Calu3 (cell line): ENCODE measurements at regions of chr1 and their contacts with region 1.

Region 1: DNA sequence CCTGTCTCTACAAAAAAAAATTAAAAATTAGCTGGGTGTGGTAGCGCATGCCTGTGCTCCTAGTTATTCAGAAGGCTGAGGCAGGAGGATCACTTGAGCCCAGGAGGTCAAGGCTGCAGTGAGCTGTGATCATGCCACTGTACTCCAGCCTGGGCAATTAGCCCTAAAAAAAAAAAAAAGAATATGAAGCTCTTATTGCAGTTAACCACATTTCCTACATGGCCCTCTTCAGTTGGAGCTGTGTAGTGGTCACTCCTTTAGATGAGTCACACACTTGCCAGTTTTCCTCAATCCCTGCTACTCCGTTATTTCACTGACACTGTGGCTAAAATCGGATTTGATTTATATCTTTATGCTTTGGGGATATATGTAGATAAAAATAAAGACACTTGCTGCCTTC is 11.8 kb downstream of the NFYC start:
- DNase-seq: no peak
- H3K4me3 Mint-ChIP-seq: no peak overlapping the region
- H3K27ac Mint-ChIP-seq: no peak overlapping the region
- H3K4me1 Mint-ChIP-seq: peaks cover 1% of the 10 kb centered on the region
- H3K27me3 Mint-ChIP-seq: no peaks in the 10 kb centered on the region
- CTCF ChIP-seq: no peak

Region 2: DNA sequence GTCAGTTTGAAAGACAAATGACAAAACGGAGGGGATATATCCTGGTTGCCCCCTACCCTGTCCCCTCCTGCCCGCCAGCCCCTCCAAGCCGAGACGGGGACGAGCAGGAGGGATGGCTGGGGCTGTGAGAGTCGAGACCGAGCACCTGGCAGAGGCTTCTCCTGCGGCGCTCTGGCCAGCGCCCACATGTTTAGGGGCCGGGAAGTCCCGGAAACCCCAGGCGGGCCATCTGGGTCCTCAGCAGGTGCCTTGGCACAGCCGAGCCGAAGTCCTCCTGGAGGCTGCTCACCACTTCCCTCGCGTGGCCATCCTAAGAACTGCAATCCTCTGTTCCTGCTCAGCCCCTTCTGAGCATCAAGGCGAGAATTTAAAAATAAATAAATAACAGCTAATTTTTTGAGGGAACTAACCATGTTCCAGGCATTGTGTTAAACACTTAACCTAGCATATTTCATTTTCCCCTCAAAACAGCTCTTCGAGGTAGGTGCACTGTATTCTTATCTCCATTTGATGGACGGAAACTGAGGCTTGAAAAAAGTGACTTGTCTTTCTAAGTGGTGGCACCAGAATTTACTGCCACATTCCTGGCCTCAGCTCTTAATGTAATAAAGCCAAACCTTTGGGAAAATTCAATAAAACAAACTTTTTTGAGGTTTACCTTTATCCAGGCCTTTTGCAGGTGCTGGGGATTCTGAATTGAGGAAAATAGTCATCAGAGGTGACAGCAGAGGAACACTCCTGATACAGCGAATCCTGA is 34.4 kb before region 1 on chr1:
- CTCF ChIA-PET with region 1: no interaction called
- intact Hi-C with region 1: no loop called
- DNase-seq: peak; percentile 89
- H3K4me3 Mint-ChIP-seq: peak overlapping the region; percentile 52
- H3K27ac Mint-ChIP-seq: no peak overlapping the region
- H3K4me1 Mint-ChIP-seq: peaks cover 10% of the 10 kb centered on the region
- H3K27me3 Mint-ChIP-seq: peaks cover 25% of the 10 kb centered on the region
- CTCF ChIP-seq: peak; percentile 83

Region 3: GRCh38 chr1:40691538-40692428 is 11.5 kb before region 1 on chr1 and contains the start of gene NFYC:
- CTCF ChIA-PET with region 1: interaction called, 16 read pairs
- intact Hi-C with region 1: no loop called
- DNase-seq: peak; percentile 98
- H3K4me3 Mint-ChIP-seq: peak within 1 kb of the TSS; percentile 99
- H3K27ac Mint-ChIP-seq: peak within 1 kb of the TSS; percentile 92
- H3K4me1 Mint-ChIP-seq: peaks cover 38% of the 10 kb centered on the region
- H3K27me3 Mint-ChIP-seq: no peaks in the 10 kb centered on the region
- CTCF ChIP-seq: no peak
- total RNA-seq, gene NFYC: 65.5 and 66.0 TPM in 2 replicates

Region 4: GRCh38 chr1:40848530-40849189 is 145.3 kb after region 1 on chr1:
- CTCF ChIA-PET with region 1: no interaction called
- intact Hi-C with region 1: no loop called
- DNase-seq: peak; percentile 83
- H3K4me3 Mint-ChIP-seq: no peak overlapping the region
- H3K27ac Mint-ChIP-seq: no peak overlapping the region
- H3K4me1 Mint-ChIP-seq: peaks cover 19% of the 10 kb centered on the region
- H3K27me3 Mint-ChIP-seq: peaks cover 1% of the 10 kb centered on the region
- CTCF ChIP-seq: peak; percentile 84